ENCODE measurements at regions of chr10 and their contacts with region 1.

Region 1: DNA sequence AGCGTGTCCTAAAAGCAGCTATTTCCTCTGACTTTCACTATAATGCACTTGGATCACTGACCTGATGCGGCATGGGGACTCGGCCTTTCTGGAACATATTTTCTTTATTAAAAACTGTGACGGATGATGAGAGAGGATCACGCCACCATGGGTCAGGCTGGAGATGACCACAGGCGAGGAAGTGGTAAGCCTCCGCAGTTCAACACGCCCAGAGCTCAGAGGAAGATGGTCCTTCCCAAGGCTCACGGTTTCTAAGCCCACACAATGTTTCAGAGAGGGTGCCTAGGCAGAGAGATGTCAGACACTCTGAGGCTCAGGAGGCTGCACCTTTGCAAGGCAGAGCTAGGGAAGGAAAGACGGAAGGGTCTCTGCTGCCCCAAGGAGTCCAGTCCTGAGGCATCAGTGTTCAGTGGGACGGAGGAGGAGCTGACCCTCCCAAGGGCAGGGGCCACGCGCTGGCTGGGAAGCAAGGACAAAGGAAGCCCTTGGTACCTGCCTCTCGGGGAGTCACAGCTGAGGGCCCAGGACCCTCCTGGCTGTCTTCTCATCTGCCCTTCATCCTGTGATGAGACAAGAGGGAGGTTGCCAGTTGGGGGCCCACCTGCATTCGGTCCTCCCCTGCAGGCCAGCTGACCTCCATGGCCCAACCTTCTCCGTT is 9.5 kb downstream of the CHST15 start:
- DNase-seq: no peak
- H3K4me3 ChIP-seq: no peak overlapping the region
- H3K27ac ChIP-seq: no peak overlapping the region
- H3K4me1 ChIP-seq: peaks cover 0 to 65% (median 33%) of the 10 kb centered on the region in 4 donors
- H3K27me3 ChIP-seq: no peaks in the 10 kb centered on the region
- CTCF ChIP-seq: no peak

Region 2: GRCh38 chr10:123092635-123093414 is 991.0 kb before region 1 on chr10:
- intact Hi-C with region 1: no loop called
- DNase-seq: no peak
- H3K4me3 ChIP-seq: no peak overlapping the region
- H3K27ac ChIP-seq: no peak overlapping the region
- H3K4me1 ChIP-seq: no peaks in the 10 kb centered on the region
- H3K27me3 ChIP-seq: peaks cover 0 to 21% of the 10 kb centered on the region in 2 donors
- CTCF ChIP-seq: no peak

Region 3: DNA sequence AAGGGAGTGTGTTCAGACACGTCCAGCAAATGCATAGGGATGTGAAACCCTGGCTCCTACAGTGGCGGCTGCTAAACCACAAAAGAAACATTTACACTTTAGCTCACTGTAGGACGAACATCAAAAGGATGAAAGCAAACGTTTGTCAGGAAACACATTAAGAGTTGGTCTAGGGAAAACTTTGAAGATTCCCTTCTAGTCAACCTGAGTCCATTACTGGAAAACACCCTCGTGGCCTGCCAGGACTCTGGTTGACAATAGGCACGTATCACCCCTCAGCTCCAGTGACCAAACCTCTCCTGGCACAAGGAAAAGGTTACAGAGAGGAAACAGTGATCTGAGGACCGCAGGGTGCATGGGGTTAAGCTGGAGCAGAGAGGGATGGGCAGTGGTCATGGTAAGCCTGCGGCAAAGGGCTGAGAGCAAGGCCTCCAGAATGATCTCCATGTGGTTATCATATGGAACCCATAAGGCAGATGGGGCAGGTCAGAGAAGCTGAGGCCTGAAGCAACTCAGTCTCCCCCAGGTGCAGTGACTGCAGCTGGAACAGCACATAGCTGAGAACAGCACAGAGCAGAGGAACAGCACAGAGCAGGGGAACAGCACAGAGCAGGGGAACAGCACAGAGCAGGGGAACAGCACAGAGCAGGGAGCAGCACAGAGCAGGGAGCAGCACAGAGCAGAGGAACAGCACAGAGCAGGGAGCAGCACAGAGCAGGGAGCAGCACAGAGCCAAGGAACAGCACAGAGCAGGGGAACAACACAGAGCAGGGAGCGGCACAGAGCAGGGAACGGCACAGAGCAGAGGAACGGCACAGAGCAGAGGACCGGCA is 40.3 kb before region 1 on chr10:
- intact Hi-C with region 1: loop called (anchors 5 kb)
- DNase-seq: peak in 1 of 2 donors; percentile 9
- H3K4me3 ChIP-seq: no peak overlapping the region
- H3K27ac ChIP-seq: no peak overlapping the region
- H3K4me1 ChIP-seq: peaks cover 0 to 5% (median 0%) of the 10 kb centered on the region in 4 donors
- H3K27me3 ChIP-seq: no peaks in the 10 kb centered on the region
- CTCF ChIP-seq: no peak

Measured in tibial artery (tissue), 4 donors.